Activated CD4-positive, alpha-beta T cell treated with anti-CD3 and anti-CD28 coated beads, Interleukin-2, amount 10 ng/mL, durations not matched to agents 24 days and 14 days (primary cell): ENCODE measurements at regions of chr1 and their contacts with region 1.

Region 1: DNA sequence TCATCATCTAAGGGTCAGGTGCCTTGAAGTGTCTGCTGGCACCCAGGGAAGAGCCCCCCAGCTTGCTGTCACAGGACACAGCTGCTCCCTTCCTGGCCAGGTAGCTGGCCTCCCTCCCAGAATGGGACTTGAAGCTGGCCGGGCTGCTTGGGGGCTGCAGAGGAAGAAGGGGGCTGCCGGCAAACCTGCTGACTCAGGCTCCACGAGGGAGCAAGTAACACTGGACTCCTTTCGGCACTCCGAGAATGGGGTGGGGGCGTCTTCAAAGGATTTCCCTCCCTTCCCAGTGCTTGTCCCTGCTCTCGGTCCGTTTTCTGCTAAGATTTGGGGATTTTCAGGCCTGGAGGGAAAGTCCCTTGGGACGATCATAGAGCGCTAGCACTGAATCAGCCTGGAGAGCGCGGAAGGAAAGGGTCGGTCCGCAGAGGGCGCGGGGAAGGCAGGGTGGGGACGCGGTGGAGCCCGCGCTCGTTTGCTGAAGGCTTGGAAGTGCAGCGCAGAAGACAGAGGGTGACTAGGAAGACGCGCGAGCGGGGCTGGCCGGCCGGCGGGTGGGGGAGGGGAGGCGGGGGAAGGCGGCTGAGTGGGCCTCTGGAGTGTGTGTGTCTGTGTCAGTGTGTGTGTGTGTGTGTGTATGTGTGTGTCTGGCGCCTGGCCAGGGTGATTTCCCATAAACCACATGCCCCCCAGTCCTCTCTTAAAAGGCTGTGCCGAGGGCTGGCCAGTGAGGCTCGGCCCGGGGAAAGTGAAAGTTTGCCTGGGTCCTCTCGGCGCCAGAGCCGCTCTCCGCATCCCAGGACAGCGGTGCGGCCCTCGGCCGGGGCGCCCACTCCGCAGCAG is at the start of gene CSF1:
- DNase-seq: peak; percentile 91
- H3K4me3 Mint-ChIP-seq: peak within 1 kb of the TSS; percentile 100
- H3K27ac Mint-ChIP-seq: peak within 1 kb of the TSS; percentile 97
- H3K4me1 Mint-ChIP-seq: peaks cover 82% of the 10 kb centered on the region
- H3K27me3 Mint-ChIP-seq: no peaks in the 10 kb centered on the region
- total RNA-seq, gene CSF1: 190 and 193 TPM in 2 replicates

Region 2: DNA sequence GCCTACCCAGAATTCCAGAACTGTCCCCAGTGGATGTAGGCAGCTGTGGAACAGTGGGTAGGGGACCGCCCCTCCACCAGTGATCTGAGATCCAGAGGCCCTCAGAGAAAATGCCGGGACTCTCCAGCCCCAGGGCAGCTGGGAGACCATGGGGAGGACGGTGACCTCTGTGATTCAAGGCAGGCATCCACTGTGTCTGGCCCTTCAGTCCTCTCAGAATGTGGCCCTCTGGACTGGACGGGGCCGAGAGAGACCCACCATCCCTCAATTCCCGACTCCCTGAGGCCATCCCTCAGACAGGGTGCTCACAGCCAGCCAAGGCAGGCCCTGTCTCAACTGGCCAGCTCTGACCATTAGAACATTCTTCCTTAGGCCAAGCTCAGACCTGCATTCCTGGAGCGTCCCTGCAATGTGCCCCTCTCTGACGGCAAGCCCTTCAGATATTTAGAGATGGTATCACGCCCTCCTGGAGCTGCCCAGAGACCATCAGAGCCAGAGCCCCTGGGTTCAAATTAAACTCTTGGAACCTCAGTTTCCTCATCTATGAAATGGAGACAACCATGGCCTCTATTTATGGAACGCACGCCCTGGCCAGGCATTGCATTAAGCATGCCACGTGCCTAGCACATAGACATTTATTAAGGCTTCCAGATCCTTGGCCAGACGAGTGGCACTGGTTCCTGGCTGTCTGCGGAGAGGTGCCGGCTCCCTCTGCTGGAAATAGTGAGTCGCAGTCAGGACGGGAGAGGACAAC is 137.0 kb before region 1 on chr1:
- intact Hi-C with region 1: loop called (anchors 1 kb)
- DNase-seq: peak; percentile 91
- H3K4me3 Mint-ChIP-seq: no peak overlapping the region
- H3K27ac Mint-ChIP-seq: no peak overlapping the region
- H3K4me1 Mint-ChIP-seq: peaks cover 20% of the 10 kb centered on the region
- H3K27me3 Mint-ChIP-seq: peaks cover 3% of the 10 kb centered on the region

Region 3: DNA sequence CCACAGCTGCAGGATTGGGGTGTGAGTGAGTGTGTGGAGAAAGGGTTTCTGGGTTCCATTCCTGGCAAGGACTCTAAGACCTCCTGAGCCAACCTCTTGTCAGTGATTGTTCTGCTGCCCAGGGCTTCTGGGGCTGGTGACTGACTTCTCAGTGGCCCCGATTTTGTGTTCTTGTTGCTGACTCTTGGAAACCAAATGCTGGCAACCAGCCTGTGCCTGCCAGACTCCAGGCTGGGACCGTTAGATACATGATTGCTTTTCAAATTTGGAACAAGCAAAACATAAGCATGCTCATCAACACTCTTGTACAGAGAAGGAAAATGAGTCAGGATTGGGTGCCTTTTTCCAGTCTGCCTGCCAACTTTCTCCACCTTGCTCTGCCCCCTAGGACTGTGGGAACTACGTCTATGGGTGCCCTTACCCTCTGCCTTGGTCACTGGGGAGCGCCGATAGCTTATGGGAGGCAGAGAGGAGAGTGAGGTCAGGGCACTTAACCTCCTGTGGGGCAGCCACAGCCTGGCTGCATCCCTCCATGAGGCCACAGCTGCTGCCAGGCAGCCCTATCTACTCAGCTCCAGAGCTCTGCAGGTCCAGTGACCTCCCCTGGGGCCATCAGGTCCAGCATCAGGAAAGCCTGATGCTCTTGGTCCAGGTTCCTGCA is 107.3 kb before region 1 on chr1:
- intact Hi-C with region 1: loop called (anchors 1 kb)
- DNase-seq: no peak
- H3K4me3 Mint-ChIP-seq: peak overlapping the region; percentile 75
- H3K27ac Mint-ChIP-seq: peak overlapping the region; percentile 98
- H3K4me1 Mint-ChIP-seq: peaks cover 76% of the 10 kb centered on the region
- H3K27me3 Mint-ChIP-seq: no peaks in the 10 kb centered on the region

Region 4: DNA sequence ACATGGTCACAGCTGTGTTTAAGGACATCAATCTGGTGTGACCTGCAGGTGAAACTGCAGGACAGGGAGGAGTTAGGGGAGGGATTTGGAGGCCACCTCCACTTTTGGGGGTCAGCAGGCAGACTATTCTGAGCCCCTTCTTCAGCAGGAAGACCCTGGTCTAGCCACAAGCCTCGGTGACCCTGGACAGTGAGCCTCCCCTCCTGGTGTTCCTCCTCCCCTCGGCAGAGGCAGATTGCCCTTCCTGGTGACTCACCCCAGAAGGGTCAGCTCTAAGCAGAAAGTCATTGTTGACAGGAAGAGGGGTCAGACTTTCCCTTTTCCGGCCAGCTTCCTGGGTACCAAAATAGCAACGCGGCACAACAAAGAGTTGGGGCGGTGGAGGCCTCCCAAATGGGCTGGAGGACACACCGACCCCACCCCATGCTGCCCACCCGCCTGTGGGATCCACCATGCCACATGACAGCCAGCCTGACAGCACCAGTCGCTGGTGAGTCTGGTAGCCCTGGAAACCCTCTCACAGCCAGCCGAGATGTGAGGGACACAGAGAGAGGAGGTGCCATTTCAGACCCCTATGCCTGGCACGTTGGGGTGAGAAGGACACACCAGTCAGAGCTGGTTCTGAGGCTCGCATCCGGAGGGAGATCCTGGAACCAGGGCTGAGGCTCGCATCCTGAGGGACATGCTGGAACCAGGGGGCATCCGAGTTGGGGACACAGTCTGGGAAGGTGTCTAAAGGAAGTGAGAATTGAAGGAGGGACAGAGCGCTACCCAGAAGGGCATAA is 14.4 kb before region 1 on chr1:
- intact Hi-C with region 1: loop called (anchors 1 kb)
- DNase-seq: peak; percentile 77
- H3K4me3 Mint-ChIP-seq: no peak overlapping the region
- H3K27ac Mint-ChIP-seq: no peak overlapping the region
- H3K4me1 Mint-ChIP-seq: peaks cover 27% of the 10 kb centered on the region
- H3K27me3 Mint-ChIP-seq: no peaks in the 10 kb centered on the region

Region 5: GRCh38 chr1:110034451-110035235 is 124.3 kb after region 1 on chr1 and contains the start of gene STRIP1:
- intact Hi-C with region 1: loop called (anchors 2 kb)
- DNase-seq: peak; percentile 98
- H3K4me3 Mint-ChIP-seq: peak within 1 kb of the TSS; percentile 97
- H3K27ac Mint-ChIP-seq: peak within 1 kb of the TSS; percentile 86
- H3K4me1 Mint-ChIP-seq: peaks cover 46% of the 10 kb centered on the region
- H3K27me3 Mint-ChIP-seq: no peaks in the 10 kb centered on the region
- total RNA-seq, gene STRIP1: 41.0 and 43.8 TPM in 2 replicates